CD4-positive, alpha-beta memory T cell (primary cell): ENCODE measurements at regions of chr19 and their contacts with region 1.

Region 1: DNA sequence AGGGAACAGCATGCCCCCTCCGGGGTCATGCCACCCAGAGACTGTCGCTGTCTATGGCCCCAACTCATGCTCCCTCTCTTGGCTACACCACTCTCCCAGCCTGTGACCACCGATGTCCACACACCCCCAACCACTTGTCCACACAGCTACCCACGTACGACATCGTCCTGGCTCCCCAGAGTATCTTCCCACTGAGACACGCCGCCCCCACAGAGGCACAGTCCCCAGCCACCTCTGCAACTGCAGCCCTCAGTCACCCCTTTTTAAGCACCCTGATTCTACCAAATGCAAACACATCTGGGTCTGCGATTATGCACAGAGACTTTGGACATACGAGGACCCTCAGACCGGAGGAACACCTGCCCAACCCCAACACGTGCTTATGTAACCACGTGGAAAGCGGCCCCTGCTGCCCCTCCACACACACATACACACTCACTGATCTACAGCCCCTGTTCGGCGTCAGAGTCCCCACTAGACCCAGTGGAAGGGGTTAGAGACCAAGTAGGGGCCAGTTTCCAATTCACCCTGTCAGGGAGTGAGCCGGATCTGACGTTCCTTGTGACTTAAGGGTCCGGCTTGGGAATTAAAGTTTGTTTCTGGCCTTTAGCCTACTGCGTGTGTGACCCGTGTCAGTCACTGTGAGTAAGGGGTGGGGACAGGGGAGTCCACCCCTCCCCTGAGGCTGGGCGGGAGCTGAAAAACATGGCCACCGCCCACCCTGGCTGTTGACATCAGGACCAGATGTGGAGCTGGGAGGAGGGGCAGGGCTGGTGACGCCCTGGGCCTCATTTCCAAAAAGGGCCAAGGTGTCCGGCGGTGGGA is 11.9 kb upstream of the AXL start:
- DNase-seq: no peak
- H3K4me3 ChIP-seq: no peak overlapping the region
- H3K4me3 Mint-ChIP-seq: no peak overlapping the region
- H3K27ac ChIP-seq: no peak overlapping the region
- H3K27ac Mint-ChIP-seq: peak overlapping the region in 2 of 7 donors; percentile 76 to 78
- H3K4me1 ChIP-seq: no peaks in the 10 kb centered on the region
- H3K4me1 Mint-ChIP-seq: peaks cover 3 to 11% (median 9%) of the 10 kb centered on the region in 4 donors
- H3K27me3 ChIP-seq: no peaks in the 10 kb centered on the region
- H3K27me3 Mint-ChIP-seq: peaks cover 0 to 3% of the 10 kb centered on the region in 2 donors

Region 2: GRCh38 chr19:41303954-41304353 is 96.8 kb after region 1 on chr19:
- CTCF ChIA-PET with region 1: interaction called, 101 read pairs
- POLR2A ChIA-PET with region 1: interaction called, 108 read pairs
- intact Hi-C with region 1: loop called (anchors 1 kb)
- DNase-seq: peak; percentile 52 to 72 (median 55)
- H3K4me3 ChIP-seq: peak overlapping the region in 1 of 2 donors; percentile 41
- H3K4me3 Mint-ChIP-seq: peak overlapping the region; percentile 77 to 100 (median 90)
- H3K27ac ChIP-seq: peak overlapping the region; percentile 76
- H3K27ac Mint-ChIP-seq: peak overlapping the region; percentile 97 to 100 (median 99)
- H3K4me1 ChIP-seq: peaks cover 100% of the 10 kb centered on the region
- H3K4me1 Mint-ChIP-seq: peaks cover 70 to 100% (median 90%) of the 10 kb centered on the region in 4 donors
- H3K27me3 ChIP-seq: no peaks in the 10 kb centered on the region
- H3K27me3 Mint-ChIP-seq: no peaks in the 10 kb centered on the region

Region 3: DNA sequence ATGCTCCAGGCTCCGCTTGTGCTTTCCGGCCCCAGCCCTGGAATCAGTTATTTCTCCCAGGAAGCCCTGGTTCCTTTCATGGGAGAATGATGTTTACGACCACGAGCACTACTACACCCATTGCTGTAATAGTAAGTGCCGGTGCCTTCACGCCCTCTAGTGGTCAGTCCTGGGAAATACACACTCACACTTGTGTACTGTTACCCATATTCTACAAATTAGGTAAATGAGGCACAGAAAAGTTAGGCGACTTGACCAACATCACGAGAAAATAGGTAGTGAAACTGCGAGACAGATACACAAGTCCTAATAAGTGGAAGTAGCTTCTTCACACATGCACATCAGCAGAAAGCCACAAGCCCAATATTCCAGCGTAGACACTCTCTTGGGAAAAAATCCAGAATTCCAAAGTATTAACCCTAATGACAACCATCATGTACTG is 390.5 kb after region 1 on chr19:
- CTCF ChIA-PET with region 1: interaction called, 7 read pairs
- POLR2A ChIA-PET with region 1: no interaction called
- intact Hi-C with region 1: loop called (anchors 1 kb)
- DNase-seq: peak; percentile 69 to 77 (median 74)
- H3K4me3 ChIP-seq: no peak overlapping the region
- H3K4me3 Mint-ChIP-seq: peak overlapping the region in 2 of 8 donors; percentile 49 to 76
- H3K27ac ChIP-seq: no peak overlapping the region
- H3K27ac Mint-ChIP-seq: peak overlapping the region in 2 of 7 donors; percentile 59 to 63
- H3K4me1 ChIP-seq: peaks cover 9% of the 10 kb centered on the region
- H3K4me1 Mint-ChIP-seq: peaks cover 7 to 11% (median 11%) of the 10 kb centered on the region in 4 donors
- H3K27me3 ChIP-seq: peaks cover 8% of the 10 kb centered on the region
- H3K27me3 Mint-ChIP-seq: peaks cover 10 to 11% of the 10 kb centered on the region in 2 donors

Region 4: GRCh38 chr19:41904118-41904870 is 697.2 kb after region 1 on chr19:
- CTCF ChIA-PET with region 1: no interaction called
- POLR2A ChIA-PET with region 1: no interaction called
- intact Hi-C with region 1: no loop called
- DNase-seq: no peak
- H3K4me3 ChIP-seq: no peak overlapping the region
- H3K4me3 Mint-ChIP-seq: peak overlapping the region in 1 of 8 donors; percentile 55
- H3K27ac ChIP-seq: no peak overlapping the region
- H3K27ac Mint-ChIP-seq: peak overlapping the region in 2 of 7 donors; percentile 46 to 66
- H3K4me1 ChIP-seq: peaks cover 33% of the 10 kb centered on the region
- H3K4me1 Mint-ChIP-seq: peaks cover 19 to 37% (median 26%) of the 10 kb centered on the region in 4 donors
- H3K27me3 ChIP-seq: no peaks in the 10 kb centered on the region
- H3K27me3 Mint-ChIP-seq: no peaks in the 10 kb centered on the region